Astrocyte of the cerebellum (primary cell): ENCODE measurements at regions of chr10 and their contacts with region 1.

Region 1: GRCh38 chr10:5283305-5284158 is 81.2 kb upstream of the UCN3 start:
- DNase-seq: peak; percentile 6
- H3K4me3 ChIP-seq: no peak overlapping the region
- CTCF ChIP-seq: peak; percentile 63

Region 2: GRCh38 chr10:4849555-4850242 is 433.8 kb before region 1 on chr10:
- in situ Hi-C with region 1: loop called (anchors 25 kb)
- DNase-seq: peak; percentile 94
- H3K4me3 ChIP-seq: no peak overlapping the region
- CTCF ChIP-seq: peak; percentile 98

Region 3: DNA sequence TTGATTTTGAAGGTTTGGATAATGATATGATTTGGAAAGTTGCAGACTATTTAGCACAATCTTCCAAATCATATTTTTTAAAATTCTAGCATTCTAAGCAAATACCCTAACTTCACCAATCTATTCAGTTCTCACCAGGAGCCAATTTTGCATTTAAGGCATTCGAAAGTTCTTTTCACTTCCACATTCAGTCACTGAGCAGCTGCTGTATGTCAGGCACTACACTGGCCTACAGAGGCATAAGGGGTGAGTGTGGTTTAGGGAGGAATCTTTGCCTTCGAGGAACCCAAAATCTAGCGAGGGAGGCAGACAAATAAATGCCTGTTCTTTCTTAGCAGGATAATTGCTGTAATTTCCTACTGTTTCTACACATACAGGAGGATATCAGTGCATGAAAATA is 70.5 kb after region 1 on chr10:
- in situ Hi-C with region 1: no loop called
- DNase-seq: no peak
- H3K4me3 ChIP-seq: no peak overlapping the region
- CTCF ChIP-seq: no peak